ENCODE measurements at regions of chr20 and their contacts with region 1.

Region 1: DNA sequence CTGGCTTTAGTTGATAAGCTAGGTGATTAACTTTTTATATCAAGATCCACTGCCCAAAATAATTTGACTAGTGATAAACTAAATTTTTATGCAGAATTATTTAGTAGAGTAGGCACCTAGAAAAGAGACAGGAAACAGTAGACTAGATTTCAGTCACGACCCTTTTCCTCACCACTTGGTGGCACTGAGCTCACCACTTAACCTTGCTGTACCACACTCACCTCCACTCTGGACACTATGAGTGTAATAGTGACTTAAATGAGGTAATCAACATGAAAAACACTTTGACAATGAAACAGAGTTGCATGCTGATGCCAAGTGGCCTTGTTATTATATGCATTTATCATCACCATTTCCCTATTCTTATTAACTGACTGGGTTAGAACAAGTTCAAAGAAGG is 730.4 kb downstream of the KIF16B start:
- DNase-seq: no peak
- ATAC-seq: no peak

Region 2: GRCh38 chr20:16241915-16242314 is 399.0 kb after region 1 on chr20:
- intact Hi-C with region 1: loop called (anchors 10 kb)
- DNase-seq: no peak
- ATAC-seq: peak; percentile 87

Measured in Right ventricle myocardium superior (tissue), 1 donor.